MCF 10A (cell line): ENCODE measurements at regions of chr22 and their contacts with region 1.

Region 1: GRCh38 chr22:36470162-36470993 is 11.1 kb downstream of the TXN2 start:
- DNase-seq: peak; percentile 85
- H3K4me3 Mint-ChIP-seq: no peak overlapping the region
- H3K27ac Mint-ChIP-seq: peak overlapping the region; percentile 51
- H3K4me1 Mint-ChIP-seq: peaks cover 48% of the 10 kb centered on the region
- H3K27me3 Mint-ChIP-seq: no peaks in the 10 kb centered on the region
- CTCF ChIP-seq: peak; percentile 91

Region 2: GRCh38 chr22:36445158-36445668 is 25.2 kb before region 1 on chr22:
- CTCF ChIA-PET with region 1: interaction called, 4 read pairs
- POLR2A ChIA-PET with region 1: interaction called, 10 read pairs
- intact Hi-C with region 1: no loop called
- DNase-seq: no peak
- H3K4me3 Mint-ChIP-seq: no peak overlapping the region
- H3K27ac Mint-ChIP-seq: no peak overlapping the region
- H3K4me1 Mint-ChIP-seq: peaks cover 6% of the 10 kb centered on the region
- H3K27me3 Mint-ChIP-seq: no peaks in the 10 kb centered on the region
- CTCF ChIP-seq: no peak

Region 3: GRCh38 chr22:36481393-36482168 is 11.2 kb after region 1 on chr22 and contains the start of gene TXN2:
- CTCF ChIA-PET with region 1: interaction called, 16 read pairs
- POLR2A ChIA-PET with region 1: interaction called, 12 read pairs
- intact Hi-C with region 1: no loop called
- DNase-seq: peak; percentile 97
- H3K4me3 Mint-ChIP-seq: peak within 1 kb of the TSS; percentile 96
- H3K27ac Mint-ChIP-seq: peak within 1 kb of the TSS; percentile 91
- H3K4me1 Mint-ChIP-seq: peaks cover 10% of the 10 kb centered on the region
- H3K27me3 Mint-ChIP-seq: no peaks in the 10 kb centered on the region
- CTCF ChIP-seq: no peak
- total RNA-seq, gene TXN2: 61.5 and 83.2 TPM in 2 replicates

Region 4: DNA sequence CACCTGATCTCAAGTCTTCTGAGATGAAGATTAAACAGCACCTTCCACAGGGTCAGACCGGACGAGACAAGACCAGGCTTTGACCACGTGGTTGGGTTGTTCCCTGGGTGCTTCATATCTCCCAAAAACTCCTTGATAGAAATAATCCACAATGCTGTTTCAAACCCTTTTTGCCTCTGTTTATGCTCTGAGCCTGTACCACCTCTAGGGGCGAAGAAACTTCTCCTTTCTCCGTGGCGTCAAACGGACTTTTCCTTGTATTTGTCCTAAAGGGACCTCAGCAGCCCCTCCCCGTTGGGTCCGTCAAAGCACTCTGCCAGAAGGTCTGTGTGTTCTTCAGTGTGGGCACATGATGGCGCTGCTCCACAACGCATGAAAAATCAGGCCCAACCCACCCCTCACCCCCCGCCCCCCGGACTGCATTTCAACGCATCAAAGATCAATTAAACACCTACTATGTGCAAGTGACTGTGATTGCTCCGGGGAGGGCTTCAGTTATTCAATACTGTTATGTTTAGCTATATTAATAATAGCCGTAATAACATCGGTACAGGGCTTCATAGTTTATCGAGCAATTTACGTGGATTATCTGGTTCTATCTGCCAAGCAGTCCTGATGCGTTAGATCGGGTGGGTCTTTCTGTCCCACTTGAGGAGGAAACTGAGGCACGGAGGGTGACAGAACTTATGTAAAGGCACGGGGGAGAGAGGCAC is 75.9 kb after region 1 on chr22:
- CTCF ChIA-PET with region 1: no interaction called
- POLR2A ChIA-PET with region 1: no interaction called
- intact Hi-C with region 1: no loop called
- DNase-seq: peak; percentile 54
- H3K4me3 Mint-ChIP-seq: no peak overlapping the region
- H3K27ac Mint-ChIP-seq: no peak overlapping the region
- H3K4me1 Mint-ChIP-seq: peaks cover 22% of the 10 kb centered on the region
- H3K27me3 Mint-ChIP-seq: peaks cover 17% of the 10 kb centered on the region
- CTCF ChIP-seq: peak; percentile 78

Region 5: GRCh38 chr22:36659762-36660509 is 189.6 kb after region 1 on chr22:
- CTCF ChIA-PET with region 1: no interaction called
- POLR2A ChIA-PET with region 1: no interaction called
- intact Hi-C with region 1: no loop called
- DNase-seq: peak; percentile 99
- H3K4me3 Mint-ChIP-seq: peak overlapping the region; percentile 52
- H3K27ac Mint-ChIP-seq: peak overlapping the region; percentile 54
- H3K4me1 Mint-ChIP-seq: peaks cover 29% of the 10 kb centered on the region
- H3K27me3 Mint-ChIP-seq: peaks cover 4% of the 10 kb centered on the region
- CTCF ChIP-seq: no peak